Psoas muscle (tissue), 8 donors: ENCODE measurements at regions of chr4 and their contacts with region 1.

Region 1: DNA sequence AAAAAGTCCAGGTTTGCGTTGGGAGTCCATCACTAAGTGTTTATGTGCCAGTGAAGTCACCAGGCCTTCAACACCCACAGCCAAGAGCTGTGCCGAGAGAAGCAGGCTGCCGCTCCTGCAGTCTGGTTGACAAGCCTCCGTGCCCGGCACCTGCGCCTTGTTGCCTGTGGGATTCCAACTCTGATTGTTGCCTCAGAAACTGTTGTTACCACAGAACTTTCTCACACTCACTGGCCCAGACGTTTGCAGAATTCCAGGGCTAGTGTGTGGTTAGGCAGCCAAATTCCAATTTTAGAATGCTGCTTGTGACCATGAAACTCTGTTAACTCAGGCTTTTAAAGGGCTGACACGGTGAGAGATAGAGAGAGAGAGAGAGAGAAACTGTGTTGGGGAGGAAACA is 119.5 kb upstream of the LIMCH1 start:
- DNase-seq: peak; percentile 62 to 87
- ATAC-seq: peak; percentile 85 to 93 (median 90)
- H3K4me3 ChIP-seq: peak overlapping the region; percentile 10
- H3K27ac ChIP-seq: peak overlapping the region; percentile 67
- H3K4me1 ChIP-seq: peaks cover 33% of the 10 kb centered on the region
- H3K27me3 ChIP-seq: no peaks in the 10 kb centered on the region
- CTCF ChIP-seq: no peak

Region 2: DNA sequence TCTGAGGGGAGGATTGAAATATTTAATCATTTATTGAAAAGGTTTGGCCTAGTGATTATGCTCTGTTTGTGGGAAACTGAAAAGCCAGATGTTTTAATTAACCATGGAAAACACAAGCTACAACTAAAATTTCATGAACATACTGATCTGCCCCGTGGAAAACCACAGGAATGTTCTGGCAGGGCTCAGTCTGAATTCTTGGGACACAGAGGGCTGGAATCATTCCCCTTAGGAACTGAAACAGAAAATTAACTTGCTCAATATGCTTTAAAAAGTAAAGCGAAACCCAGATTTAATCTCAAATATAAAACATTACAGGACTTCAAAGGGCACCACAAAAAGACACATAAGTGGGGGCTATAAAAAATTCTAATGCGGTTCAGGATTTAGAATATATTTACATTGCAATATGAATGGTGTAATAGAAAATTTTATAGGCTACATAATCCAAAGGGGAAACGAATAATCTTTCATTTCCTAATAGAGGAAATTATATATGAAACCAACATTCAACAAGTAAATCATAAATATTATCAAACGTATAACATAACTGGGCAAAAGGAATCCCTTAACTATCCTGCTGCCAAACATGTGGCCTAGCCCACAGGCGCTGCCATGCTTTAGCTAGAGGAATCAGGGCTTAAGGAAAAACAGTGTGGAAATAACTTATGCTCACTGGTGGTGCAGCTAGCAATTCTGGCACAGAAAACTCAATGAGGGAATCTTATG is 275.0 kb before region 1 on chr4:
- intact Hi-C with region 1: no loop called
- DNase-seq: peak; percentile 49 to 59
- ATAC-seq: peak; percentile 55 to 83 (median 74)
- H3K4me3 ChIP-seq: peak overlapping the region; percentile 3
- H3K27ac ChIP-seq: peak overlapping the region; percentile 54
- H3K4me1 ChIP-seq: peaks cover 37% of the 10 kb centered on the region
- H3K27me3 ChIP-seq: no peaks in the 10 kb centered on the region
- CTCF ChIP-seq: no peak

Region 3: GRCh38 chr4:41221850-41222645 is 196.4 kb before region 1 on chr4:
- intact Hi-C with region 1: no loop called
- DNase-seq: no peak
- ATAC-seq: no peak
- H3K4me3 ChIP-seq: no peak overlapping the region
- H3K27ac ChIP-seq: no peak overlapping the region
- H3K4me1 ChIP-seq: no peaks in the 10 kb centered on the region
- H3K27me3 ChIP-seq: no peaks in the 10 kb centered on the region
- CTCF ChIP-seq: no peak

Region 4: GRCh38 chr4:41369697-41370096 is 48.7 kb before region 1 on chr4:
- intact Hi-C with region 1: loop called in 1 of 2 experiments (anchors 5 kb)
- DNase-seq: peak; percentile 65 to 88
- ATAC-seq: peak; percentile 93 to 96 (median 94)
- H3K4me3 ChIP-seq: peak overlapping the region; percentile 48
- H3K27ac ChIP-seq: peak overlapping the region; percentile 91
- H3K4me1 ChIP-seq: peaks cover 70% of the 10 kb centered on the region
- H3K27me3 ChIP-seq: no peaks in the 10 kb centered on the region
- CTCF ChIP-seq: no peak

Region 5: DNA sequence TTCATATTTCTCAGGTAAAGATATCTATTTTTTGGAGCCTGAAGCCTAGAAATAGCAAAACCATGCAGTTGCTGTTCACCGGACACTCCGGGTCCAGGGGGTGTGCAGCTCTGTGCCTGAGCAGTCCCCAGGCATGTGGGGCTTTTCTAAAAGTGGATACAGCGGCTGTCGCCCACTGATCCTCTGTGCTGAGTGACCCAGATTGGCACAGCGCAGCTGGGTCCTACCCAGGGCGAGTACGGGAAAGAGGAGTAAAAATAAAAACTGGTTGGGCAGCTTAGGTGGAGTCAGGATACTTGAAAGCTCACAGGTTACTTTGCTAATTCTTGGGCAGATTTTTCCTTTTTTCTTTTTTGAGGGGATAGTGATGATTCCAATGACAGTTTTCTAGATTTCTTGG is 42.9 kb before region 1 on chr4:
- intact Hi-C with region 1: loop called in 1 of 2 experiments (anchors 5 kb)
- DNase-seq: peak; percentile 64 to 78
- ATAC-seq: peak; percentile 91 to 99 (median 96)
- H3K4me3 ChIP-seq: peak overlapping the region; percentile 9
- H3K27ac ChIP-seq: peak overlapping the region; percentile 91
- H3K4me1 ChIP-seq: peaks cover 70% of the 10 kb centered on the region
- H3K27me3 ChIP-seq: no peaks in the 10 kb centered on the region
- CTCF ChIP-seq: no peak